HCT116 (cell line): ENCODE measurements at regions of chr22 and their contacts with region 1.

Region 1: GRCh38 chr22:42614312-42615091 is at the start of gene POLDIP3:
- DNase-seq: peak; percentile 96
- ATAC-seq: peak; percentile 71
- H3K4me3 ChIP-seq: peak within 1 kb of the TSS; percentile 98
- H3K27ac ChIP-seq: peak within 1 kb of the TSS; percentile 89
- H3K4me1 ChIP-seq: peaks cover 18 to 50% of the 10 kb centered on the region in 2 experiments
- H3K27me3 ChIP-seq: no peaks in the 10 kb centered on the region
- CTCF ChIP-seq: peak in 1 of 3 experiments; percentile 26; a peak in 2 of 6 replicates
- POLR2A ChIP-seq: no peak
- RAD21 ChIP-seq: no peak
- total RNA-seq, gene POLDIP3: 67.6 TPM

Region 2: GRCh38 chr22:42533638-42533977 is 80.9 kb before region 1 on chr22:
- CTCF ChIA-PET with region 1: no interaction called
- POLR2A ChIA-PET with region 1: interaction called, 7 read pairs
- RAD21 ChIA-PET with region 1: no interaction called
- intact Hi-C with region 1: loop called (anchors 2 kb)
- DNase-seq: no peak
- ATAC-seq: no peak
- H3K4me3 ChIP-seq: no peak overlapping the region
- H3K27ac ChIP-seq: no peak overlapping the region
- H3K4me1 ChIP-seq: peaks cover 0 to 13% of the 10 kb centered on the region in 2 experiments; a peak in 3 of 4 replicates
- H3K27me3 ChIP-seq: no peaks in the 10 kb centered on the region
- CTCF ChIP-seq: no peak
- POLR2A ChIP-seq: no peak
- RAD21 ChIP-seq: no peak

Region 3: DNA sequence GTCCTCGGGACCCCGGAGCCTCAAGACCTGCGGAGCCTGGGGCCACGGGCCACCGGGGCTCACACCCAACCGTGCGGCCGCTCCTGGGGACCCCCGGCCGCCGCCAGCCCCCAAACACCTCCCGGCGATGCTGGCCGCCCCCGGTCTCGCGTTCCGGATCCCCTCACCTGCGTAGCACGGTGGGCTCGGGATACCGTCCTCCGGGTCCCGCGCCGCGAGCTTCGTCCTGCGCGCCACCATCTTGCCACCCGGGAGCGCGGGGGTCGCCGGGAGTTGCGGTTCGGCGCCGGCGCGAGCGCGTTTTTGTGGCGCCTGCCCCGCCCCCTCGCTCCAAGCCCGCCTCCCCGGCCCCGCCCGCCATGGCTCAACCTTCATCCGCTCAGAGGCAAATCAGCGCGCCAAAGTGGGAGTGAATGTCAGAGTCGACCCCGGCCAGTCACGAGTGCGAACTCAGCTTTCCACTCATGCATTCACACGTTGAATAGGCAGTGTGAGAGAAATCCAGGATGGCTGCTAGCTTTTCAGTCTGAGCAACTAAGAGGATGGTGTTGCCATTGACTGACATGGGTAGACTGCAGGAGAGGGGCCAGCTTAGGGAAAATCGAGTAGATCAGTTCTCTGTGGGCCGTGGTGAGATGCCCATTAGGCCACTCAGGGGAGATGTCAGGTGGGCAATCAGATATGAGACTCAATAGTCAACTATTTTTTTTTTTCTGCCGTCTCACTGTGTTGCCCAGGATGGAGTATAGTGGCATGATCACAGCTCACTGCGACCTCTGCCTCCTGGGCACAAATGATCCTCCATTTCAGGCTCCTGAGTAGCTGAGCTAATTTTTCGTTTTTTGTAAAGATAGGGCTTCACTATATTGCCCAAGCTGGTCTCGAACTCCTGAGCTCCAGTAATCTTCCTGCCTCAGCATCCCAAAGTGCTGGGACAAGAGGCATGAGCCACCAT is 32.5 kb before region 1 on chr22:
- CTCF ChIA-PET with region 1: no interaction called
- POLR2A ChIA-PET with region 1: interaction called, 16 read pairs
- RAD21 ChIA-PET with region 1: no interaction called
- intact Hi-C with region 1: no loop called
- DNase-seq: peak; percentile 21
- ATAC-seq: peak; percentile 87
- H3K4me3 ChIP-seq: peak overlapping the region; percentile 53 to 68
- H3K27ac ChIP-seq: peak overlapping the region; percentile 75
- H3K4me1 ChIP-seq: peaks cover 3 to 10% of the 10 kb centered on the region in 2 experiments
- H3K27me3 ChIP-seq: no peaks in the 10 kb centered on the region
- CTCF ChIP-seq: no peak
- POLR2A ChIP-seq: peak; percentile 65
- RAD21 ChIP-seq: no peak

Region 4: GRCh38 chr22:42626951-42627625 is 12.6 kb after region 1 on chr22:
- CTCF ChIA-PET with region 1: no interaction called
- POLR2A ChIA-PET with region 1: interaction called, 15 read pairs
- RAD21 ChIA-PET with region 1: no interaction called
- intact Hi-C with region 1: no loop called
- DNase-seq: no peak
- ATAC-seq: no peak
- H3K4me3 ChIP-seq: no peak overlapping the region
- H3K27ac ChIP-seq: no peak overlapping the region
- H3K4me1 ChIP-seq: peaks cover 2% of the 10 kb centered on the region in 2 experiments; a peak in 2 of 4 replicates
- H3K27me3 ChIP-seq: no peaks in the 10 kb centered on the region
- CTCF ChIP-seq: no peak
- POLR2A ChIP-seq: no peak
- RAD21 ChIP-seq: no peak

Region 5: DNA sequence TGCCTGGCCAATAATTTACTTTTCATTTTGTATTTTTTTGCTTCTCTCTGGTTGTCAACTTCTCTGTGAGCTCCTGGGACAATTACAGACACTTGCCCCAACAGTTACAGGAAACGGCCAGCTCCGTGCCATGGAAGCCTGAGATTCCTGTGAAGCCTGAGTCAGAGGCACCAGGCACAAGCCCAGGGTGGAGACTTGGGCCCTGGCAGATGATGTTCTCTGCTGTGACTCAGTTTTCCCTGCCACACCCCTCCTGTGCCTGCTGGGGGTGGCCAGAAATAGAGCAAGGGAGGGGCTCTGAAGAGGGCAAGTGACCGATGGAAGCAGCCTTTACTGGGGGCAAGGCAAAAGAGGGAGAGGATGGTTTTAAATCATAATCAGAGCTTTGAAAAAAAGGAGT is 21.0 kb after region 1 on chr22:
- CTCF ChIA-PET with region 1: no interaction called
- POLR2A ChIA-PET with region 1: interaction called, 20 read pairs
- RAD21 ChIA-PET with region 1: no interaction called
- intact Hi-C with region 1: no loop called
- DNase-seq: peak; percentile 85
- ATAC-seq: peak; percentile 91
- H3K4me3 ChIP-seq: peak overlapping the region; percentile 9 to 44; a peak in 2 of 4 replicates
- H3K27ac ChIP-seq: peak overlapping the region; percentile 90
- H3K4me1 ChIP-seq: peaks cover 14 to 52% of the 10 kb centered on the region in 2 experiments
- H3K27me3 ChIP-seq: no peaks in the 10 kb centered on the region
- CTCF ChIP-seq: no peak
- POLR2A ChIP-seq: no peak
- RAD21 ChIP-seq: no peak

Region 6: GRCh38 chr22:42868751-42869251 is 254.3 kb after region 1 on chr22:
- CTCF ChIA-PET with region 1: no interaction called
- POLR2A ChIA-PET with region 1: interaction called, 13 read pairs
- RAD21 ChIA-PET with region 1: no interaction called
- intact Hi-C with region 1: no loop called
- DNase-seq: no peak
- ATAC-seq: no peak
- H3K4me3 ChIP-seq: no peak overlapping the region
- H3K27ac ChIP-seq: peak overlapping the region; percentile 7; the same call in 1 of the 2 replicates
- H3K4me1 ChIP-seq: peaks cover 0 to 14% of the 10 kb centered on the region in 2 experiments; a peak in 3 of 4 replicates
- H3K27me3 ChIP-seq: no peaks in the 10 kb centered on the region
- CTCF ChIP-seq: no peak
- POLR2A ChIP-seq: no peak
- RAD21 ChIP-seq: no peak

Region 7: GRCh38 chr22:43126480-43127165 is 512.1 kb after region 1 on chr22:
- CTCF ChIA-PET with region 1: no interaction called
- POLR2A ChIA-PET with region 1: interaction called, 15 read pairs
- RAD21 ChIA-PET with region 1: interaction called in 1 of 2 experiments, 3 read pairs
- intact Hi-C with region 1: no loop called
- DNase-seq: peak; percentile 82
- ATAC-seq: peak; percentile 84
- H3K4me3 ChIP-seq: peak overlapping the region; percentile 71 to 76
- H3K27ac ChIP-seq: peak overlapping the region; percentile 99
- H3K4me1 ChIP-seq: peaks cover 37 to 61% of the 10 kb centered on the region in 2 experiments
- H3K27me3 ChIP-seq: no peaks in the 10 kb centered on the region
- CTCF ChIP-seq: no peak
- POLR2A ChIP-seq: no peak
- RAD21 ChIP-seq: no peak; the same call in 1 of the 2 replicates